ENCODE measurements at regions of chr6 and their contacts with region 1.

Region 1: DNA sequence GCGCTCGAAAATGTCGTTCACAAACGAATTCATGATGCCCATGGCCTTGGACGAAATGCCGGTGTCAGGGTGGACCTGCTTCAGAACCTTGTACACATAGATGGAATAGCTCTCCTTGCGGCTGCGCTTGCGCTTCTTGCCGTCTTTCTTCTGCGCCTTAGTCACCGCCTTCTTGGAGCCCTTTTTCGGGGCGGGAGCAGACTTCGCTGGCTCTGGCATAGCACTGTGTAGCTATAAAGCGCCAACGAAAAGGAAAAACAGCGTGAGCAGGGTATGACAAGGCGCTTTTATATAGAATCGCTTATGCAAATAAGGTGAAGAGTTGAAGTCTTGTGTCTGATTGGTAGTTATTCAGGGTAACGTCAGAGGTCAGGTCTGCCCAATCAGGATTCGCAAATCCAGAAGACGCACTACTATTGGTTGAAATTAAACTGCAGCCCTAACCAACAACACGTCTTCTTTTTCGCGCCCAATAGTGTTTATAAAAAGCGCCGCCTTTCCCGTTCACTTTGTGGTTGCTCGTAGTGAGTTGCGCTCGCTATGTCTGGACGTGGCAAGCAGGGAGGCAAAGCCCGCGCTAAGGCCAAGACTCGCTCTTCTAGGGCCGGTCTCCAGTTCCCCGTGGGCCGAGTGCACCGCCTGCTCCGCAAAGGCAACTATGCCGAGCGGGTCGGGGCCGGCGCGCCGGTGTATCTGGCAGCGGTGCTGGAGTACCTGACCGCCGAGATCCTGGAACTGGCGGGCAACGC is 114.8 kb upstream of the PRSS16 start:
- DNase-seq: peak; percentile 93
- ATAC-seq: peak; percentile 80
- H3K4me3 Mint-ChIP-seq: no peak overlapping the region
- H3K27ac Mint-ChIP-seq: no peak overlapping the region
- H3K4me1 Mint-ChIP-seq: peaks cover 21% of the 10 kb centered on the region
- H3K27me3 Mint-ChIP-seq: no peaks in the 10 kb centered on the region

Region 2: DNA sequence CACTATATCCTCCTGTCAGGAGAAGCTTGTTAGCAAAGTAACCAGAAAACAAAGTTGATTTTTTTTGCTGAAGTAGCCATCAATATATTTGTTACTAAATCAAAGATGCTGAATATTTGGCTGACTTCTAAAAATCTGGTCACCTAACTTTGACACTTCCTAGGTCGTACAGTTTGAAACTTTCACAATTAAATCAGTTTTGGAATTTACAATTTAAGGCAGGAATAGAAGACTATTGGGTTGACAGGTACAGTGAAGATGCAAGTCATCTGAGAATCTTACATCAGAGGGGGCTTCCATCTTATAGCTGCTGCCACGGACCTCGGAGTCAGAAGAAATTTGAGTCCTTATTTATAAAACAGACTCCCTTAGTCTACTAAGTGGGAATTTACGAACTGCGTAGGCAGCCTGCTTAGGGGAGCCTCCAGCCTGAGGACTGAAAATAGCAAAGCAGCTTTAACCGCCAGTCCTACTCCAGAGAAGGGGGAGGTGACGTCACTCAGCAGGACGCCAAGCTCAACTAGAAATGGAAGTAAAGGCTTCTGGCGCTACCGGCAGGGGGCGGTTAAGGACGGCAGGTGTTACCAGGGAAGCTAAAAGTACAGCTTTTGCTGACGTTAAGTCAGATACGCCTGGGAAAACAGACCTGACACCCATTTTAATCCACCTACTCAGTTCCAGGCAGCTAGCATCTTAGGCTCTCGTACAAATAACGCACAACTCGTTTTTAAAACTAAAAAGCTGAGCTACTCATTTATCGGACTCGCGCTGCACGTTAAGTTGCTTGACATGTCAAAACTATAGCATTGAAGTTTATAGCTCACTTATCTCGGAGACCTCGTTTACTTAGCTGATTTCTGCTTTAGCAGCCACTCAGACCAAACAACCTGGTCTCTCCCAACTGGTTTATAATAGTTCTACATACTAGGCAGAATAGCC is 1106.5 kb before region 1 on chr6:
- CTCF ChIA-PET with region 1: no interaction called
- POLR2A ChIA-PET with region 1: interaction called, 4 read pairs
- intact Hi-C with region 1: loop called in 1 of 2 experiments (anchors 1 kb)
- DNase-seq: peak; percentile 96
- ATAC-seq: peak; percentile 39
- H3K4me3 Mint-ChIP-seq: peak overlapping the region; percentile 81
- H3K27ac Mint-ChIP-seq: peak overlapping the region; percentile 98
- H3K4me1 Mint-ChIP-seq: peaks cover 51% of the 10 kb centered on the region
- H3K27me3 Mint-ChIP-seq: no peaks in the 10 kb centered on the region

Region 3: DNA sequence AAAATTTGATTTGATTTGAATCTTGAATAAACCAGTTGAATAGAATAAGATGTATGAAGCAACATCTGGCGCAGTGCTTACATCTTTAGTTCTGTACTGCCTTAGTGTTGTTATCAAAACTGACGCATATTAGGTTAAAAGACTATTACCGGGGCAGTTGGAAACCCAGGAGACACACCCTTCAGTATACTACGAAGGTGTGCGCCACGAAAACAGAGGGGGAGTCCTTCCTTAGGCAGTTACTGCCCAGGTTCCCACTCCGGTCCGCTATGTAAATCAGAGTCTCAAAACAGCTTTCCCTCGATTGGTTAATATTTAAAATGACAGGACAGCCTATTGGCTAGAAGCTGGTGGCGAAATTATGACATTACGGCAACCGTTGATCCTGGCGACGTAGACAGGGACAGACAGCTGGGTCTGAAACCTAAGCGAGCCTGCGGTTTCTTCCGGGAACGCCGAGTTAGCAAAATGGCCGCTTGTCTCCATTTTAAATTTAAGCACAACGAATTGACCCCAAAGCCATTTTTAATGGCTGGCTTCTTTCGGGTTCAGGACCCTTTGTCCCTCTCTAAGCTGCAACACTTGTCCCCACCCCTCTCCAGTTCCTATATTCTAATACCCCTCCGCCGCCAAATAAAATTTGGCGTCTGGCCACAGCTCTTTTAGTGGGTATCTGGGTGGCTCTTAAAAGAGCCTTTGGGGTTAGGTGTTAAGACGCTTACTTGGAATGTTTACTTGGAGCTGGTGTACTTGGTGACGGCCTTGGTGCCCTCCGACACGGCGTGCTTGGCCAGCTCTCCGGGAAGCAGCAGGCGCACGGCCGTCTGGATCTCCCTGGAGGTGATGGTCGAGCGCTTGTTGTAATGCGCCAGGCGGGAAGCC is 1009.7 kb before region 1 on chr6:
- CTCF ChIA-PET with region 1: no interaction called
- POLR2A ChIA-PET with region 1: interaction called, 24 read pairs
- intact Hi-C with region 1: loop called (anchors 2 kb)
- DNase-seq: peak; percentile 95
- ATAC-seq: peak; percentile 57
- H3K4me3 Mint-ChIP-seq: peak overlapping the region; percentile 82
- H3K27ac Mint-ChIP-seq: peak overlapping the region; percentile 100
- H3K4me1 Mint-ChIP-seq: peaks cover 34% of the 10 kb centered on the region
- H3K27me3 Mint-ChIP-seq: peaks cover 3% of the 10 kb centered on the region

Region 4: DNA sequence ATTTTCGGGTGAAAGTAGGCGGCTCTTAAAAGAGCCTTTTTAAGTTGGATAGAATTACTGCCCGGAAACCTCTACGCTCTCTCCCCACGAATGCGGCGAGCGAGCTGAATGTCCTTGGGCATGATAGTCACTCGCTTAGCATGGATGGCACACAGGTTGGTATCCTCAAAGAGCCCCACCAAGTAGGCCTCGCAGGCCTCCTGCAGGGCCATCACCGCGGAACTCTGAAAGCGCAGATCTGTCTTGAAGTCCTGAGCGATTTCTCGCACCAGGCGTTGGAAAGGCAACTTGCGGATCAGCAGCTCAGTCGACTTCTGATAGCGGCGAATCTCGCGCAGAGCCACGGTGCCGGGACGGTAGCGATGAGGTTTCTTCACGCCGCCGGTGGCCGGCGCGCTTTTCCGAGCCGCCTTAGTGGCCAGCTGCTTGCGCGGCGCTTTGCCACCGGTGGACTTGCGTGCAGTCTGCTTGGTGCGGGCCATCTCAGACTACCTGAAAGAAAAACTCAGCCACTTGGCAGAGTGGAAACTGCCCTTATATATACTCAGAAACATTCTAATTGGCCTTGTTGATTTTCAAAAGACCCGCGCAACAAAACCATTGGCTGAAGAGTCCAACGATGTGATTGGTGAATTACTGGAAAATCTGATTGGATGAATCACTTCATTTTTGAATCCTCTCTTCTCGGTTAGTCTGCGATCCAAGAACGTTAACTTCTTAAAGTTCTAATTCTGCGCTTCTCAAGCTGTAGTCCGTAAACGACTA is 861.6 kb before region 1 on chr6:
- CTCF ChIA-PET with region 1: no interaction called
- POLR2A ChIA-PET with region 1: interaction called, 8 read pairs
- intact Hi-C with region 1: loop called in 1 of 2 experiments (anchors 1 kb)
- DNase-seq: peak; percentile 85
- ATAC-seq: peak; percentile 43
- H3K4me3 Mint-ChIP-seq: no peak overlapping the region
- H3K27ac Mint-ChIP-seq: no peak overlapping the region
- H3K4me1 Mint-ChIP-seq: peaks cover 23% of the 10 kb centered on the region
- H3K27me3 Mint-ChIP-seq: no peaks in the 10 kb centered on the region

Region 5: GRCh38 chr6:27146706-27147505 is 14.2 kb after region 1 on chr6:
- CTCF ChIA-PET with region 1: interaction called, 15 read pairs
- POLR2A ChIA-PET with region 1: interaction called, 368 read pairs
- intact Hi-C with region 1: loop called (anchors 1 kb)
- DNase-seq: peak; percentile 89
- ATAC-seq: peak; percentile 69
- H3K4me3 Mint-ChIP-seq: no peak overlapping the region
- H3K27ac Mint-ChIP-seq: no peak overlapping the region
- H3K4me1 Mint-ChIP-seq: peaks cover 11% of the 10 kb centered on the region
- H3K27me3 Mint-ChIP-seq: no peaks in the 10 kb centered on the region

Region 6: DNA sequence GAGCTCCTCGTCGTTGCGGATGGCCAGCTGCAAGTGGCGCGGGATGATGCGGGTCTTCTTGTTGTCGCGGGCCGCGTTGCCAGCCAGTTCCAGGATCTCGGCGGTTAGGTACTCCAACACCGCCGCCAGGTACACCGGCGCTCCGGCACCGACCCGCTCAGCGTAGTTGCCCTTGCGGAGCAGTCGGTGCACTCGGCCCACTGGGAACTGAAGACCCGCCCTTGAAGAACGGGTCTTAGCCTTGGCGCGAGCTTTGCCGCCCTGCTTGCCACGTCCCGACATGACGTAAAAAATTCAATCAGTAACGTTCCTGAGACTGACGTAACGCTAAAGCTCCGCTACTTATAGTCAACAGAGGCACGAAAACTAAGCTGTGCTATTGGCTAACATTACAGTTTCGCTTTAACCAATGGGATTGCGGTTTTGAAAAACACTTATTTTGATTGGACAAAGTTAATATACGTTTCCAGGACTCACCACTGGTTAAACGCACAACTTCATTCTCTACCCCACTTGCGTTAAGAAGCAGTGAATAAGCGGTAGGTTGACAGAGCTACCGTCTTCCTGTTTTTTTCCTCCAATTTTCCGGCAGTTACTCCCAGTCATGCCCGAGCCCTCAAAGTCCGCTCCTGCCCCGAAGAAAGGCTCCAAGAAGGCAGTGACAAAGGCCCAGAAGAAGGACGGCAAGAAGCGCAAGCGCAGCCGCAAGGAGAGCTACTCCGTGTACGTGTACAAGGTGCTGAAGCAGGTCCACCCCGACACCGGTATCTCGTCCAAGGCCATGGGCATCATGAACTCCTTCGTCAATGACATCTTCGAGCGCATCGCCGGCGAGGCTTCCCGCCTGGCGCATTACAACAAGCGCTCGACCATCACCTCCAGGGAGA is 705.6 kb after region 1 on chr6:
- CTCF ChIA-PET with region 1: no interaction called
- POLR2A ChIA-PET with region 1: interaction called, 26 read pairs
- intact Hi-C with region 1: no loop called
- DNase-seq: peak; percentile 89
- ATAC-seq: peak; percentile 74
- H3K4me3 Mint-ChIP-seq: no peak overlapping the region
- H3K27ac Mint-ChIP-seq: no peak overlapping the region
- H3K4me1 Mint-ChIP-seq: peaks cover 23% of the 10 kb centered on the region
- H3K27me3 Mint-ChIP-seq: peaks cover 9% of the 10 kb centered on the region

Measured in activated CD4-positive, alpha-beta T cell treated with anti-CD3 and anti-CD28 coated beads for 36 hours (primary cell).